Head of caudate nucleus (tissue), 42 donors: ENCODE measurements at regions of chr2 and their contacts with region 1.

Region 1: GRCh38 chr2:28325567-28326468 is 66.8 kb upstream of the FOSL2 start:
- DNase-seq: peak in 2 of 42 donors; percentile 21

Region 2: DNA sequence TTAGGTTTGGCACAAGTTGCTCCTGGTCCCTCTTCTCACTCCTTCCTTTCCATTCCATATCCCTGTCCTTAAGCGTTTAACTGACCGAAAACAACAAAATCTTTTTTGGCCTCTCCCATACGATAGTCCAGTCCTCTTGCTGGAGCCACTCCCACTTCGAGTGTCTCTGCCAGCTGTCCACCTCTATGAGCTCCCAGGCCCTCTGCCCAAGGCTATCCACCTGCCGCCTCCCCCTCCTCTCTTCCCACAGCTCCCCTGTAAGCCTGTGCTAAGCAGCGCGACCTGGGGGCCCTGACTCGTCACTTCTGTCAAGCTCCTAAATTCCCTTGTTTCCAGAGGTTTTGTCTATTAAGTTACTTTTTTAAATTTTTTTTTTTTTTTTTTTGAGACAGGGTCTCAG is 19.8 kb after region 1 on chr2:
- intact Hi-C with region 1: loop called (anchors 2 kb)
- DNase-seq: no peak